HepG2 (cell line): ENCODE measurements at regions of chr1 and their contacts with region 1.

Region 1: DNA sequence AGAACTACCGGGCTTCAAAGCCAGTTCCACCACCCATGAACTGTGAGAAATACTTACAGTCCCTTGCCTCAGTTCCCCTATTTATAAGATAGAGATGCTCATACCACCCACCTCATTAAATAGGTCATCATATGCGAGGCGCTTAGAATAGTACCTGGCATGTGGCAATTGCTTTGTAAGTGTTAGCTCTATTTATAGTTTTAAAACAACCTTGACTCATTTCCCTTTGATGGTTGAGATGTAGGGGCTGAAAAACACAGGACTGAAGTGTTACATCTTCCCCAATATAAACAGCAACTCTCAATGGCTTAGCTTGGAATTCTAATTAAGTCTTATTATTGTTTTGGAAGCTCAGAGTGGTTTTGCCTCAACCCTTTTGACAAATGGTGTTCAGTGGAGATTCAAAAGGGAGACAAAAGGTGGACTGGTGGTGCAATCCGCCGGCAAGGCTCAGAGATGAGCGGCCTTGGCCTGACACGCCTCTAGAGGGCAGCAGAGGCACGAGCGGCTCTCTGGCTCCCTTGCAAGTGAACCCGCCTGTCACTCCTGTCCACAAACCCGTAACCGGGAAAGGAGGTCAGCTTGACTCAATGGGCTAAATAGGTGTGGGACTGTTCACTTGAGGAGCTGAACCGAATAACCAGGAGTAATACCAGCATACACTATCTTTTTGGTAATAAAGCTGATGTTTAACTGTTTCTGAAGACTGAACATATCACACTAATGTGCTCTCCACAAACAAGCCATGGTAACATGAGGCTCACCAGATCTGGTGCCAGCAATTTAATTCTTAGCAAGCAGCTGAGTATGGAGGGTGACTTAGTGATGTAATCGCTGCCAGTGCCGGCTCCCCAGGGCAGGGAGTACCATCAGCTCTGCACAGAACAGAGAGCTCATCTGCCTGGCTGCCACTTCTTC is 19.5 kb upstream of the SMYD2 start:
- DNase-seq: peak; percentile 52
- ATAC-seq: peak; percentile 99
- H3K4me3 ChIP-seq: no peak overlapping the region
- H3K27ac ChIP-seq: no peak overlapping the region
- H3K4me1 ChIP-seq: peaks cover 18% of the 10 kb centered on the region; the same call in 1 of the 2 replicates
- H3K27me3 ChIP-seq: peaks cover 0 to 14% of the 10 kb centered on the region in 2 experiments; a peak in 2 of 5 replicates
- CTCF ChIP-seq: peak; percentile 98
- EP300 ChIP-seq: no peak
- POLR2A ChIP-seq: no peak
- RAD21 ChIP-seq: peak; percentile 93

Region 2: DNA sequence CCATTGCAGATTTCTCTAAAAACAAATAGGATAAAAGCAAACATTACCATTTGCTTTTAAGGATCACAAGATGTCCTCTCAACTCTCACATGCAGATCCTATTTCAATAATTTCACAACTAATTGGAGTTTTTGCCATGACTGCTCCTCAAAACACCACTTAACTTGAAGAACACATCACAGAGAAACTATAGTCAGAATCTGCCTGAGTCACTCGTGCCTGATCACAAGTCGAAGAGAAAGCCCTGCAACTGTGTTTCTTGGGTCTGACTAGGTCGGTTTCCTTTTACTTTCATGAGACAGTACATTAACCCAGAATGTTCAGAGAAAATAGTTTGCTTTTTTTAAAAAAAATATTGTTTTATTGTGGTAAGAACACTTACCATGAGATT is 26.8 kb before region 1 on chr1:
- CTCF ChIA-PET with region 1: no interaction called
- POLR2A ChIA-PET with region 1: no interaction called
- in situ Hi-C with region 1: no loop called
- intact Hi-C with region 1: no loop called
- DNase-seq: no peak
- ATAC-seq: no peak
- H3K4me3 ChIP-seq: no peak overlapping the region
- H3K27ac ChIP-seq: no peak overlapping the region
- H3K4me1 ChIP-seq: peaks cover 6% of the 10 kb centered on the region; the same call in 1 of the 2 replicates
- H3K27me3 ChIP-seq: peaks cover 0 to 14% of the 10 kb centered on the region in 2 experiments; a peak in 3 of 5 replicates
- CTCF ChIP-seq: no peak
- EP300 ChIP-seq: no peak
- POLR2A ChIP-seq: no peak
- RAD21 ChIP-seq: no peak

Region 3: DNA sequence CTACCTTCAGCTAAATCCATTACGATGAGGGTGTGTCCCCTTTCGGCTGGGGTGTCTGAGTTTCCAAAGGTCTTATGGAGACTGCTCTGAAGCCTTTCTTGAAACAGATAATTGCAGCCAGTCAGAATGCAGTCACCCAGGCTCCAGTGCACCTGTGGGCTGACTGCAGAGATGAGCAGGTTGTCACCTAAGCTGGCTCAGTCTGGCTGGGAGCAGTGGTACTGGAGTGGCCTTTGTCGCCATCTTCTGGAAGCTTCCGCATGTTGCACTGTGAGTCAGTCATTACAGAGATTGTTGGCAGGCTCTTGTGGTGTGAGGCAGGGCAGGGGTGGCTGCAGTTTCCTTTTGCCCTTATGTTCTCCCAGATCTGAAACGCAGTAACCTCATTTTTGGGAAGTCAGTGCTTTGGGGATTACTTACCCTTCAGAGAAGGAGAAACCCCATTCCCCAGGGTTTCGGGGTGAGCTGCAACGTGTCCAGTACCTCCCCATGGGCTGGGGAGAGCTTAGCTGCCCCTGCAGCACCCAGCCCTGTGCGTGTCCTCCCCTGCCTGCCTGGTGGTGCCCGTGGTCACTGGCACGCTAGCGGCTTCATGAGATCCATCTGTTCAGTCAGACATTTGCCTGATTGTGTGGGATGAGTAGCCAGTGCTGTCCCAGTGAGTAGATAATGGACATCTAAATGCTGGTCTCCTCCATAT is 67.5 kb after region 1 on chr1:
- CTCF ChIA-PET with region 1: interaction called, 82 read pairs
- POLR2A ChIA-PET with region 1: no interaction called
- in situ Hi-C with region 1: loop called (anchors 5 kb)
- intact Hi-C with region 1: loop called (anchors 1 kb)
- DNase-seq: peak; percentile 65
- ATAC-seq: peak; percentile 91
- H3K4me3 ChIP-seq: no peak overlapping the region
- H3K27ac ChIP-seq: no peak overlapping the region
- H3K4me1 ChIP-seq: no peaks in the 10 kb centered on the region
- H3K27me3 ChIP-seq: no peaks in the 10 kb centered on the region
- CTCF ChIP-seq: peak; percentile 95
- EP300 ChIP-seq: no peak
- POLR2A ChIP-seq: no peak
- RAD21 ChIP-seq: peak; percentile 96

Region 4: DNA sequence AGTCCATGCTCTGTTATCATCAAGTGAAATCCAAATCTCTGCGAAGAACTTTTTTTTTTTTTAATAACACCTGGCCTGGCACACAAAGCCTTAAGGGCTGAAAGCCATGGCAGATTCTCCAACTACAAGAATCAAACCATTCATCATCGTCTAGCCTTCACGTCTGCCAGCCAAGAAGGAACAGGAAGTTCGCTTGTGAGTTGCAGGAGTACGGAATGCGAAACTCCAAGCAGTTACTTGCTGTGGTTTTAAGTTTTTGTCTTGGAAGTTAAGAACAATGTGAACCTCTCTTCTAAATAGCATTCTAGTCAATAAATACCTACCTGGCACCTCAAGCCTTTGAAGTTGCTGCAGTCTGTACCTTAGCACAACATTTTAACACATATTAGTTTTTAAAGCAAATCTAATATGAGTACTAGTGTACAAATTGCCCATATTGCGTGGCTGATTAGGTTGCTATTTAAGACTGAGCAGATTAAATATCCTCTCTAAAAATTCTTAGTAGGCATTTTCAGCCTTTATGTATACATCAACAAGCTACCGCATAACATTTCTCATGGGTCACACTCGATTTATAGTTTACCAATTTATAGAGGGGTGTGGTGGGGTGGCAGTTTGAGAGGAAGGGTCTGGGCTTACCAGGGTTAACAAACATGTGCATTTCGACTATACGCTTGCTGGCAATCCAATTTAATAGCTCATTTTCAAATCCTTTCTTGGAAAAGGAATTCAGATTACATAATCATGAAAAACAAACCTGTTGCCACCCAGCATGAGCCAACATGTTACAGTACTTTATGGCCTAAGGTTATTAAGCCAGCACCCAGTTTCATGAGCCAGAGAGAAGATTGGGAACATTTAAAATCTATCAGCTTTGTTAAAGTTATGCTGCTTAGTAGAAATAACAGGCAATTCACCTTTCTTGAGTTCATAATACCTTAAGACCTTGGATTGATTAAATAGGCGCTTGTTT is 312.2 kb after region 1 on chr1:
- CTCF ChIA-PET with region 1: no interaction called
- POLR2A ChIA-PET with region 1: no interaction called
- in situ Hi-C with region 1: no loop called
- intact Hi-C with region 1: no loop called
- DNase-seq: no peak
- ATAC-seq: no peak
- H3K4me3 ChIP-seq: no peak overlapping the region
- H3K27ac ChIP-seq: no peak overlapping the region
- H3K4me1 ChIP-seq: no peaks in the 10 kb centered on the region
- H3K27me3 ChIP-seq: peaks cover 0 to 12% of the 10 kb centered on the region in 2 experiments; a peak in 3 of 5 replicates
- CTCF ChIP-seq: no peak
- EP300 ChIP-seq: no peak
- POLR2A ChIP-seq: no peak
- RAD21 ChIP-seq: no peak